ENCODE measurements at regions of chr9 and their contacts with region 1.

Region 1: DNA sequence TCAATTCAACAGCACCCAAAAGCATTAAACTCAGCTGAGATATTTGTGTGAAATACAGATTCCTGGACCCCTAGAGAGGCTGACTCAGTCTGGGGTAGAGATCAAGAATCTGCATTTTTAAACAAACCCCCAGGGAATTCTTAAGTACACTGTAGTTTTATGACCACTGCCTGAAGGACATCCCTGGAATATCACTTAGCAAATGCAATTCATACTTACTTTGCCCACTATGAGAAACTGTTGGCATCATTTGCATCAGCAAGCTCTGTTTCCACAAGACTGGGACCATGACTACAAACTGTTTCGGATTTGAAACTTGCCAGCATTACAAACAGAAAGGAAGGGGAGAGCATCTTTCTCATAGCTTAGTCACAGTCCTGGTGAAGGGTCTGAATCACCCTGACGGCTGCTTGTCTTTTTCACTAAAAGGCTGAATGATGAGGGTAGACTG is 63.7 kb downstream of the MLLT3 start:
- DNase-seq: no peak
- ATAC-seq: peak in 3 of 8 donors; percentile 26 to 44 (median 33)
- H3K4me3 ChIP-seq: no peak overlapping the region
- H3K27ac ChIP-seq: no peak overlapping the region
- H3K4me1 ChIP-seq: peaks cover 3 to 59% (median 25%) of the 10 kb centered on the region in 9 donors
- H3K27me3 ChIP-seq: no peaks in the 10 kb centered on the region
- CTCF ChIP-seq: no peak

Region 2: DNA sequence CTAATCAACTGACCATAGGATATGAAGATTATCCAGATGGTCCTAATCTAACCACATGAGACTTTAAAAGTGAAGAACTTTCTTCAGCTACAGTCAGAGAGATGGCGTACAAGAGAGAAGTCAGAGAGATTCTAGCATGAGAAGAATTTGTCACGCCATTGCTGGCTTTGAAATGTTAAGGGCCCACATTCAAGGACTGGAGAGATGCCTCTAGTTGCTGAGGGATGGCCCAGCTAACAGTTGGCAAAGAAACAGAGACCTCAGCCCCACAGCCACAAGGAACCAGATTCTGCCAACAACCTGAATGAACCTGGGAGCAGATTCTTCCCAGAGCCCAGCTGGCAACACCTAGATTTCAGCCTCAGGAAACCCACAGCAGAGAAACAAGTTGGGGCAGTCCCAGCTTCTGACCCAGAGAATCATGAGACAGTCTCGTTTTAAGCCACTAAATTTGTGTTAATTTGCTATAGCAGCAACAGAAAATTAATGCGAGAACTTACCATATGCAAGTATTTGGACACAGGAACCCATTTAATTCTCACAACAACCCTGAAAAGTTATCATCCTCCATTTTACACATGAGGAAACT is 68.3 kb before region 1 on chr9:
- intact Hi-C with region 1: loop called in 1 of 10 experiments (anchors 10 kb)
- DNase-seq: no peak
- ATAC-seq: no peak
- H3K4me3 ChIP-seq: no peak overlapping the region
- H3K27ac ChIP-seq: no peak overlapping the region
- H3K4me1 ChIP-seq: peaks cover 0 to 31% (median 9%) of the 10 kb centered on the region in 9 donors
- H3K27me3 ChIP-seq: no peaks in the 10 kb centered on the region
- CTCF ChIP-seq: no peak